PC-9 (cell line): ENCODE measurements at regions of chr17 and their contacts with region 1.

Region 1: GRCh38 chr17:2282297-2282873 is 21.2 kb downstream of the SMG6 start:
- DNase-seq: peak; percentile 6 to 56
- H3K4me3 ChIP-seq: no peak overlapping the region
- H3K27ac ChIP-seq: 0 out of 2 replicates have a peak overlapping the region, but pooled peaks have one; percentile 23
- H3K4me1 ChIP-seq: no peaks in the 10 kb centered on the region
- H3K27me3 ChIP-seq: no peaks in the 10 kb centered on the region
- CTCF ChIP-seq: peak; percentile 81

Region 2: DNA sequence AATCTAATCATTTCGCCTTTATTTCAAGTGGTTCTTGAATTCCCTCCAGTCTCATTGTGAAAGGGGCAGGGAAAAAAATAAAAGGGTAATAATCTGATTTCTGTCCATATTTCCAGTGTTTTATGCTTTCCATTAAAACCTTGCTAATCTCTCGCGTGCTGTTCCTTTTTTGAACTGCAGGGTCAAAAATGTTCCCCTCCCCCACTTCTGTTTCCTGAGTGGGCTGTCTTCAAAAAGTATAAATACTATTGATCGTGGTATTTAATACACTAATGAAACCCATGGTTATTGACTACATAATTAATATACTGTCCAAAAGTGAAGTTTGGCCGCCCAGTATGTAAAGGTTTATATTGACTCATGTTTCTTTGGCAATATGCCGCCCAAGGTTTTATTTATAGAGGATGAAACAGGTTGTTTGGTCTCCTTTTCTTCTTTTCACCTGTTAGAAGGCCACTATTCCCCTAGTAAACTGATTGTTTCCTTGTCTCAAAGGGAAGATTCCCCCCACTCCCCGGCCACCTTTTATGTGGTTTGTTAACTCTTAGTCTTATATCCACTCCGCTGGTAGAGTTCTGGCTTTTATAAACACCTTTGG is 382.9 kb before region 1 on chr17:
- CTCF ChIA-PET with region 1: no interaction called
- POLR2A ChIA-PET with region 1: no interaction called
- intact Hi-C with region 1: loop called (anchors 10 kb)
- DNase-seq: no peak
- H3K4me3 ChIP-seq: no peak overlapping the region
- H3K27ac ChIP-seq: no peak overlapping the region
- H3K4me1 ChIP-seq: peaks cover 6% of the 10 kb centered on the region
- H3K27me3 ChIP-seq: no peaks in the 10 kb centered on the region
- CTCF ChIP-seq: peak; percentile 41; the same call in 1 of the 2 replicates

Region 3: GRCh38 chr17:2101448-2102257 is 180.7 kb before region 1 on chr17:
- CTCF ChIA-PET with region 1: no interaction called
- POLR2A ChIA-PET with region 1: no interaction called
- intact Hi-C with region 1: no loop called
- DNase-seq: peak; percentile 96 to 99
- H3K4me3 ChIP-seq: no peak overlapping the region
- H3K27ac ChIP-seq: peak overlapping the region; percentile 77
- H3K4me1 ChIP-seq: peaks cover 17% of the 10 kb centered on the region
- H3K27me3 ChIP-seq: no peaks in the 10 kb centered on the region
- CTCF ChIP-seq: no peak

Region 4: GRCh38 chr17:2238432-2239169 is 43.8 kb before region 1 on chr17:
- CTCF ChIA-PET with region 1: no interaction called
- POLR2A ChIA-PET with region 1: no interaction called
- intact Hi-C with region 1: no loop called
- DNase-seq: no peak
- H3K4me3 ChIP-seq: no peak overlapping the region
- H3K27ac ChIP-seq: no peak overlapping the region
- H3K4me1 ChIP-seq: peaks cover 12% of the 10 kb centered on the region
- H3K27me3 ChIP-seq: no peaks in the 10 kb centered on the region
- CTCF ChIP-seq: no peak

Region 5: DNA sequence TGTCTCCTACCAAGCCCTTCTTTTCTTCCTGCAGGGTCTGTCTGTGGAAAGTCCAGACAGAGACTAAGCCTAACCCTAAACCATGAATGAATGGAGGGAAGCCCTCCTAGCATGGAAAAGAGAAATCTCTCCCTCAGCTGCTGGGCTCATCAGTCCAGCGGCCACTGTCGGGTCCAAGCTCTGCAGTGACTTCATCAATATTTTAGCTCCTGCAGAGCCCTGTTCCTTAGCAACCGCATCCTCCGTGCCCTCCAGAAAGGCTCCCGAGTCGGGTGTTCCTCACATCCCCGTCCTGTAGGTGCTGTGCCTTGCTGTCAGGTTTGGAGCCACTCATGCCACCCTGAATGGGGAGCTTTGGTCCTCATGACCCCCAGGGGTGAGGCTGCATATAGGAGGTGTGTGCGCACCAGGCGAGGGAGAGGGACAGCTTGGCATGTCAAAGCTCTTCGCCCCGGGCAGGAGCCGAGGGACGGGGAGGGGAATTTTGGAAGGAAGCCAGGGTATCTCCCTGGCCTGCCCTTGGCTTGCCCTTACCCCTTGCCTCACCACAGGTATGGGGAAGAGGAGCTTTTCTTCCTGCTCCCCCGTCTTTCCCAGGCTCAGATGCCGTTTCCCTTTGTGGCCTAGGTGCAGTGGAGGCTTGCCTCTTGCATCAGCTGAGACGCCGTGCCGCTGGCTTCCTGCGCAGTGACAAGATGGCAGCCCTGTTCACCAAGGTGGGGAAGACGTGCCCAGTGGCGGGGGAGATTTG is 78.8 kb after region 1 on chr17:
- CTCF ChIA-PET with region 1: no interaction called
- POLR2A ChIA-PET with region 1: no interaction called
- intact Hi-C with region 1: no loop called
- DNase-seq: peak; percentile 72 to 84
- H3K4me3 ChIP-seq: no peak overlapping the region
- H3K27ac ChIP-seq: no peak overlapping the region
- H3K4me1 ChIP-seq: peaks cover 43% of the 10 kb centered on the region
- H3K27me3 ChIP-seq: no peaks in the 10 kb centered on the region
- CTCF ChIP-seq: no peak

Region 6: DNA sequence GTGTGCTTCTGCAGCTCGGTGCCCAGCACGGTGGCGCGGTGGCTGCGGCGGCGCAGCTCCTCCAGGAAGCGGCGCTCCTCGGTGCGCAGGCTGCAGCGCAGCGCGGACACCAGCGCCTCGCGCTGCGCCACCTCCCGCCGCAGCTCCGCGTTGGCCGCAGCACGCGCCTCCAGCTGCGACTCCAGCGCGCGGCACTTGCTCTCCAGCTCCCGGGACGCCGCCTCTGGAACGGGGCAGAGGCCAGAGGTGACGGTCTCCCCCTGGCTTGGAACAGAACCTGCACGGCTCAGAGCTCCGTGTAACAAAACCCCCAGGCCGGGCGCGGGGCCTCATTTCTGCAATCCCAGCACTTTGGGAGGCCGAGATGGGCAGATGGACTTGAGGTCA is 442.4 kb after region 1 on chr17:
- CTCF ChIA-PET with region 1: interaction called, 21 read pairs
- POLR2A ChIA-PET with region 1: no interaction called
- intact Hi-C with region 1: no loop called
- DNase-seq: no peak
- H3K4me3 ChIP-seq: no peak overlapping the region
- H3K27ac ChIP-seq: no peak overlapping the region
- H3K4me1 ChIP-seq: no peaks in the 10 kb centered on the region
- H3K27me3 ChIP-seq: peaks cover 21% of the 10 kb centered on the region
- CTCF ChIP-seq: no peak